Left cardiac atrium (tissue), 4 donors: ENCODE measurements at regions of chr11 and their contacts with region 1.

Region 1: DNA sequence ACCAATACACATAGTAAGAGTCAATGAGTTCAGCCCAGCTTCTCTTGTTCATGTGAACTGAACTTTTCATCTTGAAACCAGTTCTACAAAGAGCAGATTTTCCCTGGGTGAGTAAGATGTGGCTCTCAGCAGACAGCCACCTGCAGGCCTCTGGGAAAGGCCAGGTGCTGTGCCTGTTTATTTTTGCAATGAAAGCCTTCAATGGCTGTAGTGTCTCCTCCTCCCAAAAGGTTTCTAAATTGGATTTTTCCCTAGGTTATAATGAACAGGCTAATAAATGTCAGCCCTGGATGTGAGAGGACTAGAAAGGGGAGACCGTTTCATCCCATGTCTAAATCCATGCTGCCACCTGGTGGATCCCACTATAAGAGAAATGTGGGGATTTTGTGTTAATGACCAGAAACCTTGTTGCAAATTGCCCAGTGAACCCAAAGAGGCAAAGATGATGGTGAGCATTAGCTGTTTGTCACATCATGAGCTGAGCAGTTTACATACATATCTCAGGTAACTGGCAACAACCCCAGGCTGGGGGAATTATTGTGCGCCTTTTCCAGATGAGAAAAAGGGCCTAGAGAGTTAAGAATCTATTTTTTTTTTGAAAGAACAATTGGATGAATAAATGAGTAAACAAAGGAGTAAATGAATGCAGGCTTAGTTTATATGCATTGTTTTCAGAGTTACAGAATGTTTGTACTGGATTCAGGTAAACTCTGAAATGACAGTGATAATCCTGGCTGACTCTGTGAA is 12.7 kb downstream of the C11orf91 start:
- DNase-seq: peak; percentile 36
- ATAC-seq: no peak

Region 2: DNA sequence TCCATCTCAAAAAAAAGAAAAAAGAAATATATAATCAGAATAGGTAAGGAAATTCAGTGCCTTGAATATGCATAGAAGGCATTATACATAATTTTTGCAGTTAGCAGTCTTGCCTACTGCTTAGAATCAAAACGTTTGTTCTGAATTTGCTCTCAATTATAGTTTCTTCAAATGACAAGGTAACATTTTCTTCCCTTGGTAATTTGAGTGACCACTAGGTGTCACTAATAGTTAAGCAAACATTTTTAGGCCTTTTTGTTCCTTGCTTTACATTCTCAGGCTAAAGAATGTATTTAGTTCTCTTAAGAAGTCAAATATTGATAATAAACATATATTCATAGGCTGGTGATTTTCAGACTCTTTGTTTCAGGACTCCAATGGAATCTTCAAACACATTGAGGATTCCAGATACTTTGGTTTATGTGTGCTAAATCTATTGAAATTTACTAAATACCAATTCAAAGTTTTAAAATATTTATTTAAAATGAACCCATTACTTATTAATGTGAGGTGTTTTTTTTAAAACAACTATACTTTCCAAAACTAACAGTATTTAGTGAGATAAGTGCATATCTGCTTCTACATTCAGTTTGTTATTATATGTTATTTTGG is 727.2 kb before region 1 on chr11:
- intact Hi-C with region 1: loop called in 1 of 2 experiments (anchors 10 kb)
- DNase-seq: no peak
- ATAC-seq: no peak

Region 3: DNA sequence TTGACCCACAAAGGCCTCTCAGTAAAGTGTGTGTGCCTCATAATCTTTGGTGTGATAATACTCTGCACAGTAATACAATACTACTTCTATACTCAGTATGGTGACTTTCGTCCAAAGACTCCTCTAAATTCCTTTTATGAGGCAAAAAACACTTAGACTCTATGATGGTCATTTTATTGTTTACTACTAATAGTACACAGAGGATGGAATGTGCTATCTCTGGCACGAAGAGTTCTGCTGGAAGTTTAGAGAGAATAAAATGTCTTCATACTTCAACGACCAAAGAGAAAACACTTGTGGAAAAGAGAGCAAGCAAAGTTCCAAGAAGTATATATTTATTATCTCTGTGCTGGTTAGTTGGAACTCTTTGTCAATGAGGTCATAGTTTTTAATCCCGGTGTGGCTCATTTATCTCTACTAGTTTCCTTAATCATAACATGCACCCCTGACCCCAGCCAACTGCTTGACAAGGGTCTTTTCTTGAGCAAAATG is 519.2 kb before region 1 on chr11:
- intact Hi-C with region 1: loop called (anchors 5 to 10 kb)
- DNase-seq: no peak
- ATAC-seq: peak in 1 of 2 donors; percentile 34

Region 4: GRCh38 chr11:33362051-33362910 is 325.6 kb before region 1 on chr11:
- intact Hi-C with region 1: loop called (anchors 2 to 5 kb)
- DNase-seq: no peak
- ATAC-seq: peak; percentile 44 to 60

Region 5: GRCh38 chr11:33500861-33501479 is 186.9 kb before region 1 on chr11:
- intact Hi-C with region 1: no loop called
- DNase-seq: no peak
- ATAC-seq: no peak

Region 6: GRCh38 chr11:33736148-33736809 is 48.4 kb after region 1 on chr11 and contains the start of gene CD59:
- intact Hi-C with region 1: loop called in 1 of 2 experiments (anchors 5 kb)
- DNase-seq: peak; percentile 98
- ATAC-seq: peak; percentile 98
- total RNA-seq, gene CD59: 633 to 874 TPM

Region 7: GRCh38 chr11:34721646-34722045 is 1033.7 kb after region 1 on chr11:
- intact Hi-C with region 1: no loop called
- DNase-seq: no peak
- ATAC-seq: no peak